Activated T-helper 1 cell treated with anti-CD3 and anti-CD28 coated beads, Interleukin-12 subunit alpha, Interleukin-12 subunit beta, Interleukin-2, Interleukin-4 antibody, amounts not matched to agents 30 ng/mL and 10 ng/mL and 1 ng/mL, durations not matched to agents 14 hours and 24 hours and 36 hours (primary cell): ENCODE measurements at regions of chr4 and their contacts with region 1.

Region 1: GRCh38 chr4:183504064-183504929 is 561 bp upstream of the ING2 start:
- DNase-seq: peak; percentile 100
- H3K4me3 Mint-ChIP-seq: peak overlapping the region; percentile 92
- H3K27ac Mint-ChIP-seq: peak overlapping the region; percentile 97
- H3K4me1 Mint-ChIP-seq: peaks cover 23% of the 10 kb centered on the region
- H3K27me3 Mint-ChIP-seq: no peaks in the 10 kb centered on the region

Region 2: DNA sequence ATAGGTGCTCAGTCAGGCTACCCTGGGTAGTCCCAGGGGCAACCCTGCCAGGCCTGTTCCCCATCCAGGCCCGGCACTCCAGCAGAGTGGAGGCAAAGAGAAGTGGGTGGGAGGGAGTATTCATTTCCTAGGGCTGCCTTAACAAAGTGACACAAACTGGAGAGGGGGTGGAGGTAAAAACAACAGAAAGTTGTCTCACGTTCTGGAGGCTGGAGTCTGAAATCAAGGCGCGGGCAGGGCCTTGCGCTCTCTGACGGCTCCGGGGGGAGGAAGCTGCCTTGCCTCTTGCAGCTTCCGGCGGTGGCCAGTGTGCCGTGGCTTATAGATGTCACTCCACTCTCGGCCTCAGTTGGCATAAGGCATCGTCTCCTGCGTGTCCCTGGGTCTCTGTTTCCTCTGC is 677.9 kb before region 1 on chr4:
- intact Hi-C with region 1: no loop called
- DNase-seq: no peak
- H3K4me3 Mint-ChIP-seq: no peak overlapping the region
- H3K27ac Mint-ChIP-seq: no peak overlapping the region
- H3K4me1 Mint-ChIP-seq: peaks cover 18% of the 10 kb centered on the region
- H3K27me3 Mint-ChIP-seq: no peaks in the 10 kb centered on the region

Region 3: DNA sequence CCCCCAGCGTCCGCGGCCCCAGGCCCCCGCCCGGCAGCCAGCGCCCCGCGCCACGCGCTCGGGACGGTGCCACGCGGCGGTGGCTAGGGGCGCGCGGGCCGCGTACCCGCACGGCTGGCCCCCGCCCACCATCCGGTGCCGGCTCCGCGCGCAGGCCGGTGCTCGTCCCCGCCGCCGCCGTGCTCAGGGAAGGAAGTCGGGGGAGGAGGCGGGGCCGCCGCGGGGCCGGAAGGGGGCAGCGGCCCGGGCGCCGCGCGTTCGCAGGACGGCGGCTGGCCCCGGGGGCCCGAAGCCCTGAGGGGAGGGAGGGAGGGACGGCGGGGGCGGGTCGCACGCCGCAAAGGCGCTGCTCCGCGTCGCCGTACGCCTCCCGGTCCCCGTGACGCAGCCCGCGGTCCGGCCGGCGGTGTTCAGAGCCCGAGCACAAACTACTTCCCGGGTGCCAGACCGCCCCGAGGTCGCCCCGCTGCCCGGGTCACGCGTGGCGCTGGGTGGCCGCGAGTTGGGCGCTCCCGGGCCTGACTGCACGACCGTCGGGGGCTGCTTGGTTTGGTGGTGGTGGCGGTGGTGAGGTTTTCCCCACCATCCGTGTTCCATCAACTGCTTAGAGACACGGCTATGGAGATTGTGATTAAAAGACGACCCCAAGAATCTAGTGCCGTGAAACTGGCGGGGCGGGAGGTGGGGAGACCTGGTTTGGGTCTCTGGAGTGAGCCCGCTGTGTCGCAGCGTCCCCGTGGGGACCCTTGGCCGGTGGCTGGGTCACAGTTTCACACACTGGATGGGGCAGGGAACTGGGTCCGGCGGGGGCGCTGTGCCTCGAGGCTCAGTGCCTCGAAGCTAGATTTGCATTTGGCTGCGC is 586.9 kb before region 1 on chr4 and contains the start of gene DCTD:
- intact Hi-C with region 1: loop called (anchors 1 kb)
- DNase-seq: peak; percentile 78
- H3K4me3 Mint-ChIP-seq: peak within 1 kb of the TSS; percentile 92
- H3K27ac Mint-ChIP-seq: peak within 1 kb of the TSS; percentile 97
- H3K4me1 Mint-ChIP-seq: peaks cover 50% of the 10 kb centered on the region
- H3K27me3 Mint-ChIP-seq: peaks cover 10% of the 10 kb centered on the region
- total RNA-seq, gene DCTD: 122 and 131 TPM in 2 replicates

Region 4: GRCh38 chr4:183383606-183384225 is 120.6 kb before region 1 on chr4:
- intact Hi-C with region 1: no loop called
- DNase-seq: no peak
- H3K4me3 Mint-ChIP-seq: no peak overlapping the region
- H3K27ac Mint-ChIP-seq: no peak overlapping the region
- H3K4me1 Mint-ChIP-seq: no peaks in the 10 kb centered on the region
- H3K27me3 Mint-ChIP-seq: peaks cover 5% of the 10 kb centered on the region

Region 5: GRCh38 chr4:183444214-183445066 is 59.9 kb before region 1 on chr4 and contains the start of gene CDKN2AIP:
- intact Hi-C with region 1: loop called (anchors 1 kb)
- DNase-seq: peak; percentile 93
- H3K4me3 Mint-ChIP-seq: peak within 1 kb of the TSS; percentile 99
- H3K27ac Mint-ChIP-seq: peak within 1 kb of the TSS; percentile 99
- H3K4me1 Mint-ChIP-seq: peaks cover 42% of the 10 kb centered on the region
- H3K27me3 Mint-ChIP-seq: peaks cover 2% of the 10 kb centered on the region
- total RNA-seq, gene CDKN2AIP: 23.9 and 24.1 TPM in 2 replicates

Region 6: GRCh38 chr4:183636923-183637322 is 132.6 kb after region 1 on chr4:
- intact Hi-C with region 1: loop called (anchors 5 kb)
- DNase-seq: no peak
- H3K4me3 Mint-ChIP-seq: no peak overlapping the region
- H3K27ac Mint-ChIP-seq: no peak overlapping the region
- H3K4me1 Mint-ChIP-seq: peaks cover 20% of the 10 kb centered on the region
- H3K27me3 Mint-ChIP-seq: peaks cover 1% of the 10 kb centered on the region

Region 7: GRCh38 chr4:183722731-183723560 is 218.6 kb after region 1 on chr4:
- intact Hi-C with region 1: loop called (anchors 2 kb)
- DNase-seq: peak; percentile 44
- H3K4me3 Mint-ChIP-seq: peak overlapping the region; percentile 84
- H3K27ac Mint-ChIP-seq: no peak overlapping the region
- H3K4me1 Mint-ChIP-seq: peaks cover 15% of the 10 kb centered on the region
- H3K27me3 Mint-ChIP-seq: peaks cover 34% of the 10 kb centered on the region

Region 8: DNA sequence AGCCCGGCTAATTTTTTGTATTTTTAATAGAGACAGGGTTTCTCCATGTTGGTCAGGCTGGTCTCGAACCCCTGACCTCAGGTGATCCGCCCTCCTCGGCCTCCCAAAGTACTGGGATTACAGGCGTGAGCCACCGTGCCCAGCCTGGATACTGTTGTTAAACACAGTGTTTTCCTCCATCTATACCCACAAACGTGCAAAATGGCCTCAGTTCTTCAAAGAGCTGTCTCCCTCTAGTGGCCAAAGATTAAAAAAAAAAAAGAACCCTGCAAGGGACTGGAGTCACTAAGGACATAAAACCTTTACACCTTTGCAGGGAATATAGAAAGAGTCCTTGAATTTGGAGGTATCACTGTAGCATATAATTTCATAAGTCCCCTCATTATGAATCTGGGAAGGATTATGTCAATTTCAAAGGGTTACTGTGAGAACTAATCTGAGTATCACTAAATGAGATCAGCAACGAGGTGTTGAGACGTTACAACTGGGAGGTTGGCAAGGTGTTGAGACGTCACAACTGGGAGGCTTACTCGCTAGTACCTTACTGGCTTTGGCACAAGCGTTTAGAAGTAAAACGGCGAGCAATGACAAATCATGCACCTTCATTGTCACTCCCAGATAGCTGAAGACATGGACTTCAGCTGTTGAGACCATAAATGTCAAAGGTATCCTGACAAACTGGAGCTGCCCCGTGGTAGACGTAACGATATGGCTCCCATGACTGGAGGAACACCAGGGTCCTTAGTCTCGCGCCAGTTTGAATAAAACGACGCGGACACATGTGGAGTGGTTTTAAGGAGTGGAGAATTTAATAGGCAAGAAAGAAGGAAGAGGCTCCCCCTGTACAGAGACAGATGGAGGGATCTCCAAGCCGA is 746.7 kb after region 1 on chr4:
- intact Hi-C with region 1: loop called (anchors 5 kb)
- DNase-seq: no peak
- H3K4me3 Mint-ChIP-seq: peak overlapping the region; percentile 27
- H3K27ac Mint-ChIP-seq: peak overlapping the region; percentile 94
- H3K4me1 Mint-ChIP-seq: peaks cover 38% of the 10 kb centered on the region
- H3K27me3 Mint-ChIP-seq: peaks cover 1% of the 10 kb centered on the region

Region 9: GRCh38 chr4:185425647-185426352 is 1921.5 kb after region 1 on chr4 and contains the start of gene UFSP2:
- intact Hi-C with region 1: loop called (anchors 1 kb)
- DNase-seq: peak; percentile 86
- H3K4me3 Mint-ChIP-seq: peak within 1 kb of the TSS; percentile 88
- H3K27ac Mint-ChIP-seq: peak within 1 kb of the TSS; percentile 92
- H3K4me1 Mint-ChIP-seq: peaks cover 35% of the 10 kb centered on the region
- H3K27me3 Mint-ChIP-seq: peaks cover 7% of the 10 kb centered on the region
- total RNA-seq, gene UFSP2: 19.8 and 19.9 TPM in 2 replicates